Activated naive CD4-positive, alpha-beta T cell treated with anti-CD3 and anti-CD28 coated beads for 36 hours (primary cell): ENCODE measurements at regions of chr19 and their contacts with region 1.

Region 1: DNA sequence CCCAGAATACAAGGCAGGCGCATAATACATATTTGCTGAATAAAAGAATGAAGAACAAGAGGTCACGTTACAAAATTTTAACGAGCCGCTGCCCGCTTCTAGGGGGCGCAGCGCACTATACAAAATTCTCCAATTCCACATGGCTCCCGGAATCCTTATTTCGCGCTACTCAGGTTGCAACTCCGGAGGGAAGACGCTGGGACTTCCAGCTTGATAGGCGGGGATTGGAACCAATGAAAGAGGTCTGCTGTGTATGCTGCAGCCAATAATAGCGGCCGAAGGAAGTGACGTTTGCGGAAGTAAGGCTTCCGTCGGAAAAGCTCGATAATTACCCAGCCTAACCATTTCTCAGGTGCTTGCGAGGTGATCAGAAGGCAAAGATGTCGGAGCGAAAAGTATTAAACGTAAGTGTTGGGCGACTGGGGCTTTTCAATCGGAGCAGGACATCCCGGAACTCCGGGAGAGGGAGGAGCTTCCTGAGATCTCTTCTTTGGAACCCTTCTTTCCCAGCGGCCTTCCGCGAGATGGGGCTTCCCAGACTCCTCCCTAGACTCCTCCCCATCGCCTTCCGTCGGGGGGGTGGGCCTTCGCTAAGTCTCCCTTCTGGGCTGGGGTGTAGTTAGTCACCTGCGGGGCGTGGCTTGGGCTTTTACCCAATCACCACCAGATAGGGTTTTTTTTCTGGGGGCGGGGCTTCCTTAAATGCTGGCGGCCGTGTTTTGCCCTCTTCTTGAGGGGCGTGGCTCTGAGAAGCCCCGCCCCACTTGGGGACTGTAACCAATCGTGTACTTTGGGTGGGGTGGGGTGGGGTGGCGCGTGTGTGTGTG is at the start of gene YJU2:
- DNase-seq: peak; percentile 100
- H3K4me3 Mint-ChIP-seq: peak within 1 kb of the TSS; percentile 80
- H3K27ac Mint-ChIP-seq: peak within 1 kb of the TSS; percentile 95
- H3K4me1 Mint-ChIP-seq: peaks cover 22% of the 10 kb centered on the region
- H3K27me3 Mint-ChIP-seq: no peaks in the 10 kb centered on the region
- total RNA-seq, gene YJU2: 28.5 to 29.8 TPM

Region 2: GRCh38 chr19:4014541-4015491 is 232.2 kb before region 1 on chr19:
- CTCF ChIA-PET with region 1: no interaction called
- intact Hi-C with region 1: no loop called
- DNase-seq: peak; percentile 37
- H3K4me3 Mint-ChIP-seq: no peak overlapping the region
- H3K27ac Mint-ChIP-seq: no peak overlapping the region
- H3K4me1 Mint-ChIP-seq: peaks cover 22% of the 10 kb centered on the region
- H3K27me3 Mint-ChIP-seq: no peaks in the 10 kb centered on the region

Region 3: DNA sequence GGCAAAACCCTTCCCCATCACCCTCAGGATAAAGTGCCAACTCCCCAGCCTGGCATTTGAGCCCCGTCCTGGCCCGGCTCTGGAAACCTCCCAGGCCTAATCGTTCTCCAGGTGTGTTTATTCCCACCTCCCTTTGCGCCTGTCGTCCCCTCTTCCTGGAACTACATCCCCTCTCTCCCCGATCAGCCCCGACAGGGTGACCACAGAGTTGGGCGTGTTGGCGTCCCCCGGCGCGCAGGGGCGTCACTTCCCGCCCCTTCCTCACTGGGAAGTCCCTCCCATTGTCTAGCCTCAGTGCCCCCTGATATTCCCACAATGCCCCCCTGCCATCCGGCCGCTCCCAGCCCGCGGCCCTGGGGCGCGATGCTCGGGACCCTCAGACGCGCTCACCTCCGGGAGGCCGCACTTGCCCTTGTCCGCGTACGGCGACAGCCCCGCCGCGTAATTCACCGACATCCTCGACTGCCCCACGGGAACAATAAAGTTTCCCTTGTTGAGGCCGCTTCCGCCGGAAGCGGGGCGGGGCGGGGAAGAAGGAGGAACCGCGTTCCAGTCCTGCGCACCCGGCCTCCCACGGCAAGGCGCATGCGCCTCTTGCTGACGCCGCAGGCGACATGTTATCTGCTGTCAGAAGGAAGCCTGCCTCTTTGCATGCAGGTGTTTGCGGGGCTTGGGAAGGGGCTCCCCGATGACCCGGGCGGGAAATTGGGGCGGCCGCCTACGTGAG is 64.7 kb before region 1 on chr19 and contains the starts of genes ANKRD24 and SIRT6:
- CTCF ChIA-PET with region 1: no interaction called
- intact Hi-C with region 1: loop called (anchors 1 kb)
- DNase-seq: peak; percentile 97
- H3K4me3 Mint-ChIP-seq: peak within 1 kb of the TSS; percentile 97
- H3K27ac Mint-ChIP-seq: peak within 1 kb of the TSS; percentile 93
- H3K4me1 Mint-ChIP-seq: peaks cover 34% of the 10 kb centered on the region
- H3K27me3 Mint-ChIP-seq: no peaks in the 10 kb centered on the region
- total RNA-seq, gene ANKRD24: 2.5 to 2.6 TPM
- total RNA-seq, gene SIRT6: 20.0 to 20.1 TPM

Region 4: GRCh38 chr19:4304530-4305252 is 57.7 kb after region 1 on chr19 and contains the start of gene FSD1:
- CTCF ChIA-PET with region 1: no interaction called
- intact Hi-C with region 1: loop called (anchors 1 kb)
- DNase-seq: peak; percentile 79
- H3K4me3 Mint-ChIP-seq: peak within 1 kb of the TSS; percentile 71
- H3K27ac Mint-ChIP-seq: peak within 1 kb of the TSS; percentile 84
- H3K4me1 Mint-ChIP-seq: peaks cover 34% of the 10 kb centered on the region
- H3K27me3 Mint-ChIP-seq: no peaks in the 10 kb centered on the region
- total RNA-seq, gene FSD1: 12.3 to 17.5 TPM

Region 5: DNA sequence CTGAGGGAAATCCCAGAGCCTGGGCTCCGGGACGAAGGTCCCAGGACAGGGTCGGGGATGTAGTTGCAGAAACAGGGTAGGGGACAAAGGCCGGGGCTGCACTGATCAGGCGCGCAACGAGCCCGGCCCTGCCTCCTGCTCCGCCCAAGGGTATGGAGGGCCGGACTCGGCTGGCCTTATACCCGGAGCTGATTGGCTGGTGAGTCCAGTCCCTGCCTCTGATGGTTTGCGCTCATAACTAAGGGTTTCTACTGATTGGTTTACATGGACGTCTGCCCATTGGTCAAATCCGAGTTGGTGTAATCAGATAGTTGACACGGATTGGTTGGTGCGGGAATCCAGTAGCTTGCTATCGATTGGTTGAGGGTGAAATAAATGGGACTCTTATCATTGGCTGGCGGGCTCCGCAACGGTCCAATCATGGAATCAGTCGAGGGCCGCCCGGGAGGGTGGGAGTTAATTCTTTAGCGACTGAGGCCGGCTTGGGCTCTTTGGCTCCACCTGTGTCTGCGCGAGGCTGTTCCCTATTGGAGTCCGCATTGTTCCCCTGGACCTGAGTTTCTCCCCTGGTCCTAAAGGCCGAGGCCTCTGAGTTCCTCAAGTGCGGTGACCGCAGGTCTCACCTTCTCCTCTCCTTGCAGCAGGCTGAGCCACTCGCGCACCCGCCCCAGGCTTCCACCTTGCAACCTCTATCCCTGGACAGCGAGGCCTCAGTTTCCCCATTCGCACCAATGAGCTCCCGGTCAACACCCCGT is 95.8 kb after region 1 on chr19:
- CTCF ChIA-PET with region 1: interaction called, 3 read pairs
- intact Hi-C with region 1: loop called (anchors 1 kb)
- DNase-seq: peak; percentile 97
- H3K4me3 Mint-ChIP-seq: peak overlapping the region; percentile 94
- H3K27ac Mint-ChIP-seq: peak overlapping the region; percentile 94
- H3K4me1 Mint-ChIP-seq: peaks cover 27% of the 10 kb centered on the region
- H3K27me3 Mint-ChIP-seq: no peaks in the 10 kb centered on the region

Region 6: GRCh38 chr19:4457654-4458395 is 210.8 kb after region 1 on chr19 and contains the start of gene UBXN6:
- CTCF ChIA-PET with region 1: no interaction called
- intact Hi-C with region 1: loop called (anchors 2 kb)
- DNase-seq: peak; percentile 99
- H3K4me3 Mint-ChIP-seq: peak within 1 kb of the TSS; percentile 86
- H3K27ac Mint-ChIP-seq: peak within 1 kb of the TSS; percentile 85
- H3K4me1 Mint-ChIP-seq: peaks cover 12% of the 10 kb centered on the region
- H3K27me3 Mint-ChIP-seq: no peaks in the 10 kb centered on the region
- total RNA-seq, gene UBXN6: 28.7 to 36.2 TPM